Activated B cell treated with CpG ODN at 0.5 μM for 24 hours (primary cell): ENCODE measurements at regions of chr2 and their contacts with region 1.

Region 1: GRCh38 chr2:168346725-168347477 is 99.5 kb upstream of the STK39 start:
- DNase-seq: peak; percentile 24
- ATAC-seq: peak; percentile 72
- H3K4me3 Mint-ChIP-seq: peak overlapping the region; percentile 78
- H3K27ac Mint-ChIP-seq: no peak overlapping the region
- H3K4me1 Mint-ChIP-seq: peaks cover 22% of the 10 kb centered on the region
- H3K27me3 Mint-ChIP-seq: peaks cover 5% of the 10 kb centered on the region
- CTCF ChIP-seq: peak; percentile 61

Region 2: DNA sequence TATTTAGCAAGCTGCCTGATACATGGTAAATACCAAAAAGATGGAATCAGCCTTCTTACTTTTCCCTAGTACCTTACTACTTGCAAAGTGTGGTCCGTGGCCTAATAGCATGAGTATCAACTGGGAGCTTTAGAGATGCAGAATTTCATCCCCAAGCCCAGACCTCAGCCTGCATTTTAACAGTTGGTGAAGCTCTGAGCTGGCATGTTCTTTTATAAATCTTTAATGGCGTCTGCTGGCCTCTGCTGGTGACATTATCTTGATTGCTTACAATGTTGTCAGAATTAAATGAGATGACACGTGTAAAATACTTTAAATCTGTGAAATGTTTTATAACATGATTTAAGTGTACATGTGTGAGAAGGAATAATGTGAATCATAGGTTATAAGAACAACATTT is 340.4 kb after region 1 on chr2:
- CTCF ChIA-PET with region 1: interaction called, 85 read pairs
- POLR2A ChIA-PET with region 1: no interaction called
- intact Hi-C with region 1: loop called (anchors 1 kb)
- DNase-seq: no peak
- ATAC-seq: no peak
- H3K4me3 Mint-ChIP-seq: no peak overlapping the region
- H3K27ac Mint-ChIP-seq: no peak overlapping the region
- H3K4me1 Mint-ChIP-seq: no peaks in the 10 kb centered on the region
- H3K27me3 Mint-ChIP-seq: no peaks in the 10 kb centered on the region
- CTCF ChIP-seq: no peak

Region 3: DNA sequence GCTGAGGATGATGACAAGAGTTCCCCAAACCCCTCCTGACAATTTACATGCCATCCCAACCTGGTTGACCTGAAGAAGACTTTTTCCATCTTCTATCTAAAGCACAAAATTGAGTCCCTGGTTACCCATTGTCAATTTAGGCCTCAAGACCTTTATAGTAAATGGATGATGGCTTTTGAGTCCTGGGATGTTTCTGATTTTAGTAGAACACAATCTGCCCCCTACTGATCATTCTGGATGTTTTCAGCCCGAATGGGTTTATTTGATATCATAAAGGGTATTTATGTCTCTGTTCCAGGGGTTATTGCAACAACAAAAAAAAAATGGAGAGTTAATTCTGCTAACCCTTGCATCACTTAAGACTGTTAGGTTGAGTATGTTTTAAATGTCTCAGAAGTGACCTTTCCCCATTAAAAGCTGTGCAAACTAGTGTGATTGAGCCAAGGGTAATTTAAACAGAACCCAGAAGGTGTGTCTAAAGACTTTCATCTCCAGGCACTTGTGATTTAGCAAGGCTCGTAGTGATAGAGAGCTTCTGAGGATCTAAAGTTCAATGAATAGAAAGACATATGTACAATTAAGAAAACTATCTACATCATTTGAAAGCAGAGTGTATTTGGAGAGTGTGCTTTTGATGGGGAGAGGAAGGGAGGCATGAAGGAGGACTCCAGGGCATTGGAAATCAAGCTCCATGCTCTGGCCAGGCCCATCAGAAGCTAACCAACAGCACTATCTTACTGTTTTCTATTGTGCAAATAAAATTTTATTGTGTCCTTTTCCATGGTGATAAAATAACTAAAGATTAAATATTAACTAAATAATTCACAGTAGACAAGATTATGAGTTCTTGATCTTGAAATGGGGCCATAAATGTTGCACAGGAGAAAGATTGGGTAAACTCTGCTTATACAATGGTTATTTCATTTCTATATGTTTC is 358.9 kb after region 1 on chr2:
- CTCF ChIA-PET with region 1: interaction called, 11 read pairs
- POLR2A ChIA-PET with region 1: no interaction called
- intact Hi-C with region 1: loop called (anchors 1 kb)
- DNase-seq: no peak
- ATAC-seq: no peak
- H3K4me3 Mint-ChIP-seq: no peak overlapping the region
- H3K27ac Mint-ChIP-seq: no peak overlapping the region
- H3K4me1 Mint-ChIP-seq: peaks cover 2% of the 10 kb centered on the region
- H3K27me3 Mint-ChIP-seq: no peaks in the 10 kb centered on the region
- CTCF ChIP-seq: no peak

Region 4: GRCh38 chr2:168920504-168921157 is 573.7 kb after region 1 on chr2:
- CTCF ChIA-PET with region 1: interaction called, 23 read pairs
- POLR2A ChIA-PET with region 1: no interaction called
- intact Hi-C with region 1: loop called (anchors 1 kb)
- DNase-seq: no peak
- ATAC-seq: no peak
- H3K4me3 Mint-ChIP-seq: no peak overlapping the region
- H3K27ac Mint-ChIP-seq: no peak overlapping the region
- H3K4me1 Mint-ChIP-seq: no peaks in the 10 kb centered on the region
- H3K27me3 Mint-ChIP-seq: peaks cover 10% of the 10 kb centered on the region
- CTCF ChIP-seq: peak; percentile 50

Region 5: GRCh38 chr2:169131587-169132512 is 784.9 kb after region 1 on chr2:
- CTCF ChIA-PET with region 1: no interaction called
- POLR2A ChIA-PET with region 1: no interaction called
- intact Hi-C with region 1: loop called (anchors 5 kb)
- DNase-seq: no peak
- ATAC-seq: peak; percentile 86
- H3K4me3 Mint-ChIP-seq: no peak overlapping the region
- H3K27ac Mint-ChIP-seq: no peak overlapping the region
- H3K4me1 Mint-ChIP-seq: no peaks in the 10 kb centered on the region
- H3K27me3 Mint-ChIP-seq: no peaks in the 10 kb centered on the region
- CTCF ChIP-seq: peak; percentile 52